GM12878 (cell line): ENCODE measurements at regions of chr4 and their contacts with region 1.

Region 1: GRCh38 chr4:153083447-153083947 is 120.7 kb upstream of the TRIM2 start:
- DNase-seq: peak; percentile 40
- ATAC-seq: peak; percentile 85
- H3K4me3 ChIP-seq: no peak overlapping the region
- H3K27ac ChIP-seq: no peak overlapping the region
- H3K4me1 ChIP-seq: no peaks in the 10 kb centered on the region
- H3K27me3 ChIP-seq: no peaks in the 10 kb centered on the region; a peak in 2 of 4 replicates
- CTCF ChIP-seq: peak; percentile 53 to 76 (median 64)
- EP300 ChIP-seq: no peak
- POLR2A ChIP-seq: no peak
- RAD21 ChIP-seq: peak; percentile 65

Region 2: GRCh38 chr4:152408514-152409327 is 674.8 kb before region 1 on chr4:
- CTCF ChIA-PET with region 1: interaction called, 11 read pairs
- POLR2A ChIA-PET with region 1: no interaction called
- RAD21 ChIA-PET with region 1: interaction called, 6 read pairs
- SMC1A ChIA-PET with region 1: no interaction called
- in situ Hi-C with region 1: no loop called
- intact Hi-C with region 1: no loop called
- DNase-seq: no peak
- ATAC-seq: peak; percentile 86
- H3K4me3 ChIP-seq: no peak overlapping the region
- H3K27ac ChIP-seq: no peak overlapping the region
- H3K4me1 ChIP-seq: no peaks in the 10 kb centered on the region
- H3K27me3 ChIP-seq: no peaks in the 10 kb centered on the region
- CTCF ChIP-seq: peak; percentile 53 to 58 (median 58); a peak in 5 of 6 replicates
- EP300 ChIP-seq: no peak
- POLR2A ChIP-seq: no peak
- RAD21 ChIP-seq: peak; percentile 72

Region 3: GRCh38 chr4:152613841-152614721 is 469.4 kb before region 1 on chr4:
- CTCF ChIA-PET with region 1: no interaction called
- POLR2A ChIA-PET with region 1: no interaction called
- RAD21 ChIA-PET with region 1: no interaction called
- SMC1A ChIA-PET with region 1: no interaction called
- in situ Hi-C with region 1: no loop called
- intact Hi-C with region 1: no loop called
- DNase-seq: no peak
- ATAC-seq: no peak; the same call in 2 of the 3 replicates
- H3K4me3 ChIP-seq: no peak overlapping the region
- H3K27ac ChIP-seq: no peak overlapping the region
- H3K4me1 ChIP-seq: no peaks in the 10 kb centered on the region
- H3K27me3 ChIP-seq: no peaks in the 10 kb centered on the region; a peak in 1 of 4 replicates
- CTCF ChIP-seq: no peak
- EP300 ChIP-seq: no peak
- POLR2A ChIP-seq: no peak
- RAD21 ChIP-seq: no peak

Region 4: DNA sequence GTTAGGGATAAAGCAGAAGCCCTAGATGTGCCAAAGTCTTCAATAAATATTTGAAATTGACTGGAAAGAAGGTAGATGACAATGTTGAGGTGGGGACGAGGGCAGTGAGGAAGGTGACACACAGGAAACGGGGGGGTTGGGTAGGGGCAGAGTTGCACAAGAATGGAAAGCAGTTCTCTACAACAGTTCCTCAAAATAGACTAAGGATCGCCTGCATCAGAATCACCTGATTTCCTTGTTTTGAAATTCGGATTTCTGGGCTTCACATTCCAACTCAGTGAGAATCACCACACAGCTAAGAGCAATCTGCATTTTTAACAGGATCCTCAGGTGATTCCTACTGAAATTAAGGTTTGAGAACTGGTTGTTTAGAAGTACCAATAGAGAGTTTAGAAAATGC is 233.1 kb before region 1 on chr4:
- CTCF ChIA-PET with region 1: interaction called, 93 read pairs
- POLR2A ChIA-PET with region 1: no interaction called
- RAD21 ChIA-PET with region 1: interaction called, 33 read pairs
- SMC1A ChIA-PET with region 1: interaction called, 61 read pairs
- in situ Hi-C with region 1: loop called (anchors 5 kb)
- intact Hi-C with region 1: loop called (anchors 1 kb)
- DNase-seq: peak; percentile 25
- ATAC-seq: peak; percentile 92
- H3K4me3 ChIP-seq: peak overlapping the region; percentile 10; the same call in 1 of the 2 replicates
- H3K27ac ChIP-seq: peak overlapping the region; percentile 66
- H3K4me1 ChIP-seq: peaks cover 6% of the 10 kb centered on the region
- H3K27me3 ChIP-seq: no peaks in the 10 kb centered on the region
- CTCF ChIP-seq: no peak
- EP300 ChIP-seq: no peak
- POLR2A ChIP-seq: no peak
- RAD21 ChIP-seq: no peak

Region 5: GRCh38 chr4:153023681-153024394 is 59.7 kb before region 1 on chr4:
- CTCF ChIA-PET with region 1: no interaction called
- POLR2A ChIA-PET with region 1: no interaction called
- RAD21 ChIA-PET with region 1: no interaction called
- SMC1A ChIA-PET with region 1: no interaction called
- in situ Hi-C with region 1: no loop called
- intact Hi-C with region 1: no loop called
- DNase-seq: no peak
- ATAC-seq: peak; percentile 71
- H3K4me3 ChIP-seq: no peak overlapping the region
- H3K27ac ChIP-seq: no peak overlapping the region
- H3K4me1 ChIP-seq: 0 out of 2 replicates have a peak, but pooled peaks cover 5% of the 10 kb centered on the region
- H3K27me3 ChIP-seq: no peaks in the 10 kb centered on the region
- CTCF ChIP-seq: no peak
- EP300 ChIP-seq: no peak
- POLR2A ChIP-seq: no peak
- RAD21 ChIP-seq: no peak

Region 6: GRCh38 chr4:153107246-153107645 is 23.7 kb after region 1 on chr4:
- CTCF ChIA-PET with region 1: interaction called, 12 read pairs
- POLR2A ChIA-PET with region 1: no interaction called
- RAD21 ChIA-PET with region 1: interaction called, 4 read pairs
- SMC1A ChIA-PET with region 1: interaction called, 4 read pairs
- in situ Hi-C with region 1: no loop called
- intact Hi-C with region 1: no loop called
- DNase-seq: no peak
- ATAC-seq: no peak
- H3K4me3 ChIP-seq: no peak overlapping the region
- H3K27ac ChIP-seq: no peak overlapping the region
- H3K4me1 ChIP-seq: no peaks in the 10 kb centered on the region
- H3K27me3 ChIP-seq: 0 out of 4 replicates have a peak, but pooled peaks cover 0 to 2% of the 10 kb centered on the region in 2 experiments
- CTCF ChIP-seq: no peak
- EP300 ChIP-seq: no peak
- POLR2A ChIP-seq: no peak
- RAD21 ChIP-seq: no peak

Region 7: DNA sequence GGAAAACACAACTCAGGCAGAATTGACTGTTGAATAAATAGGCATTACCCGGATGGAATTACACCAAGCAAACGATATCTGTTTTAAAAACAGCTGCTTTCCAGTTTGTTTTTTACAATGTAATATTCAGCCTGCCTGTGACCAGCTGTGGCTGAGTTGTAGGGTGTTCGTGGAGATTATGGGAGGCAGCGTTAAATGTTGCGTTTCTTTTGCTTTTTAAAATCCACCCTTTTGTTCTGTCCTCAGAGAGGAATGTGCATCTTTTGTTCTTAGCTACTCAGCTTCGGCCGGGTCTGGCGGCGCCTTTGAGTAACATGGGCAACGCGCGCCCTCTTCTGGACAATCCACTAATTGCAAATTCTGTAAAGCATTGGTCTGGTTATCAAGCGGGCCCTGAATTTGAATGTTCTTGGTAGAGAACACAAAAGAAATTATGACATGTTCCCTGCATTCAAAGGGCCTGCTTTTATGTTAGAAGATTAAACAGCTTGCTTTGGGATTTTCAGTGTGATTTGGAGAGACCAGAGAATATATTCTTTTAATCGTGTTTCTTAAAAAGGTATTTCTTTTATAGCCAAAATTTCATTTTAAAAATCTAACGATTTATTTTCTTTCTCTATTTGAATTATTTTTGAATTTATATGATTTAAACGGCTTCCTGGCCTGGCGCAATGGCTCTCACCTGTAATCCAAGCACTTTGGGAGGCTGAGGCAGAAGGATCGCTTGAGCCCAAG is 44.4 kb after region 1 on chr4:
- CTCF ChIA-PET with region 1: interaction called, 269 read pairs
- POLR2A ChIA-PET with region 1: interaction called, 4 read pairs
- RAD21 ChIA-PET with region 1: interaction called, 71 read pairs
- SMC1A ChIA-PET with region 1: interaction called, 85 read pairs
- in situ Hi-C with region 1: no loop called
- intact Hi-C with region 1: loop called (anchors 1 kb)
- DNase-seq: peak; percentile 27
- ATAC-seq: peak; percentile 96
- H3K4me3 ChIP-seq: no peak overlapping the region
- H3K27ac ChIP-seq: no peak overlapping the region
- H3K4me1 ChIP-seq: no peaks in the 10 kb centered on the region
- H3K27me3 ChIP-seq: no peaks in the 10 kb centered on the region
- CTCF ChIP-seq: peak; percentile 76 to 92 (median 80)
- EP300 ChIP-seq: no peak
- POLR2A ChIP-seq: no peak
- RAD21 ChIP-seq: peak; percentile 92

Region 8: GRCh38 chr4:153643406-153644383 is 560.2 kb after region 1 on chr4:
- CTCF ChIA-PET with region 1: interaction called, 12 read pairs
- POLR2A ChIA-PET with region 1: no interaction called
- RAD21 ChIA-PET with region 1: interaction called, 4 read pairs
- SMC1A ChIA-PET with region 1: interaction called, 8 read pairs
- in situ Hi-C with region 1: no loop called
- intact Hi-C with region 1: loop called (anchors 5 kb)
- DNase-seq: peak; percentile 50
- ATAC-seq: peak; percentile 88
- H3K4me3 ChIP-seq: no peak overlapping the region
- H3K27ac ChIP-seq: no peak overlapping the region
- H3K4me1 ChIP-seq: peaks cover 6% of the 10 kb centered on the region; the same call in 1 of the 2 replicates
- H3K27me3 ChIP-seq: no peaks in the 10 kb centered on the region
- CTCF ChIP-seq: peak; percentile 50 to 65 (median 54); a peak in 5 of 6 replicates
- EP300 ChIP-seq: no peak
- POLR2A ChIP-seq: no peak
- RAD21 ChIP-seq: peak; percentile 78